Gastrocnemius medialis (tissue), 4 donors: ENCODE measurements at regions of chr3 and their contacts with region 1.

Region 1: DNA sequence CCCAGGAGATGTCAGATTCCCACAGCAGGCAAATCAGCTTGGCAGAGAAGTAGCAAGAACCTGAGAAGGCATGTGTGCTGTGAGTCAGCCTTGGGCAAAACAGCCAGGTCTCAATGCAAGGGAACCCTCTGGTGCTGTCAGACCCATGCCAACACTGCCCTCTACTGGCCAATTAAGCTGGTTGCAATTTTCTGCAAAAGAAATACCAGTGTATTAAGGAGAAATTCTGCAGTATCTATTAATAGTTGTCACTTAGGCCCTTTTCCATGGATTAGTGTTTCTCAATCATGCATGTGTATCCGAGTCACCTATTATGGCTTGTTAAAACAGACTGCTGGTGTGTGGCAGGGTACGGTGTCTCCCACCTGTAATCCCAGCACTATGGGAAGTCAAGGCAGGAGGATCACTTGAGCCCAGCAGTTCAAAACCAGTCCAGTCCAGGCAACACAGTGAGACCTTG is 26.2 kb downstream of the MAP4 start:
- DNase-seq: peak; percentile 90 to 94
- ATAC-seq: peak; percentile 98 to 99
- H3K4me3 ChIP-seq: peak overlapping the region in 1 of 4 donors; percentile 14
- H3K27ac ChIP-seq: peak overlapping the region; percentile 80 to 87 (median 81)
- H3K4me1 ChIP-seq: peaks cover 49 to 53% of the 10 kb centered on the region in 2 donors
- H3K27me3 ChIP-seq: no peaks in the 10 kb centered on the region
- CTCF ChIP-seq: peak; percentile 93 to 96 (median 94)
- POLR2A ChIP-seq: no peak

Region 2: DNA sequence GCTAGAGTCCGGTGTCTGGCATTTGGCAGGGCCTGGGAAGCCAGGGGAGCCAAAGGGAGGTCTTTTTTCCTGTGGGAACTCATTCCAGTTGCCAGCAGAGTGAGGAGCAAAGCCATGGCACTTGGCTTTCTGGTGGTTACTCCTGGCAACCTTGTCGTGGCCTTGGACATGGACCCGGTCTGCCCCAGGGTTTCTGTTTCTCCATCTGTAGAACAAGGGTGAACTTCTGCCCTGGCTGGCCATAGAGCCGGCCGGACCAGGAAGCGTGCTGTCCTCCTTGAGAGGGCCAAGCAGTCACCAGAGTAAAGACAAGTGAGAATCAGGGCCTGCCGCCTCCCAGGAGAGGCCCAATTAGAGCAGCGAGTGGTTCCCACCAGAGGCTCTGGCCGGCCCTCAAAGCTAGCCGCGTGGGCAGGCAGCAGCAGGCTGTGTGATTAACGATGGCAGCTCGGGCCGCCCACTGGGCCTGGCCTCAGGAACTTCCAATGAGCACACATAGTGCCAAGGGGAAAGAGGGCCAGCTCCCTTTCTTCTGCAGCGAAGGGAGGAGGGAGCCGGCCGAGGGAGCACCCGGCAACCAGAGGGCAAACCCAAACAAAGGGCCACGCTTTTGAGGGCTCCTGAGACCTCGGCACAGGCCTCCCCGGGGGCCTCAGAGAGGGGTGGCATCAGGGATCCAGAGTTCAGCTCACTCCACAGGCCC is 447.4 kb before region 1 on chr3:
- in situ Hi-C with region 1: loop called in 1 of 4 experiments (anchors 25 kb)
- intact Hi-C with region 1: no loop called
- DNase-seq: peak in 1 of 2 donors; percentile 13
- ATAC-seq: no peak
- H3K4me3 ChIP-seq: no peak overlapping the region
- H3K27ac ChIP-seq: no peak overlapping the region
- H3K4me1 ChIP-seq: no peaks in the 10 kb centered on the region
- H3K27me3 ChIP-seq: no peaks in the 10 kb centered on the region
- CTCF ChIP-seq: no peak
- POLR2A ChIP-seq: no peak

Region 3: GRCh38 chr3:47836986-47837385 is 153.0 kb before region 1 on chr3:
- in situ Hi-C with region 1: loop called in 3 of 4 experiments (anchors 10 kb)
- intact Hi-C with region 1: loop called (anchors 1 kb)
- DNase-seq: no peak
- ATAC-seq: no peak
- H3K4me3 ChIP-seq: no peak overlapping the region
- H3K27ac ChIP-seq: peak overlapping the region in 1 of 4 donors; percentile 54
- H3K4me1 ChIP-seq: no peaks in the 10 kb centered on the region
- H3K27me3 ChIP-seq: no peaks in the 10 kb centered on the region
- CTCF ChIP-seq: no peak
- POLR2A ChIP-seq: no peak

Region 4: DNA sequence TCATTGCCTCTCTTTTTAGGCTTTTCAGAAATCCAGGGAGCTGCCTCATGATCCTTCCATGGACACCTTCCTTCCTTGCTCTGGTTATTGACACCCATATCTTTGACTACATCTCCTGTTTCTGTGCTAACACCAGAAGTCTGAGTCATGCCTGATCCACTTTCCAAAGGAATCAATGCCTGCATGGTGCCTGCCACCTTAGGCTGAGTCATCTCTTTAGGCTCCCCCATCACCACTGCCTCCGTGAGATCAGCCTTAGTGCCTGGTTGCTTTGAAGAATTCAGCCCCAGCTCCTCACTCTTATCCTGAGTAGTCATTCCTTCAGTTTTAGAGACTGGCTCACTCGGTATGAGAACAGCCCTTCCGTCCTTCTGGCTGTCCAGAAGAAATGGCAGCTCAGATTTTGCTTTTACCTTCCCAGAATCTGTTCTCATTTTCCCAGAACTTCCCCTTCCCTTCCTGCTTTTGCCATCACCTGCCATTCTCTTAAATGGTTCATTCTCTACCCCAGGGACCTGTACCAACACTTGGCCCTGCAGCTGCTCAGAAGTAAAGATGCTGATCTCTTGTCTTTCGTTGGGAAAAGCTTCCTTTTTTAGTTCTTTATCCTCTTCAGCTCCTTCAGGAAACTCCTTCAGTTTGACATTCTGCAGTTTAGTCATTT is 79.1 kb before region 1 on chr3:
- in situ Hi-C with region 1: no loop called
- intact Hi-C with region 1: loop called (anchors 5 kb)
- DNase-seq: peak; percentile 19 to 46
- ATAC-seq: peak; percentile 83 to 90
- H3K4me3 ChIP-seq: no peak overlapping the region
- H3K27ac ChIP-seq: peak overlapping the region; percentile 58 to 80 (median 74)
- H3K4me1 ChIP-seq: peaks cover 14 to 31% of the 10 kb centered on the region in 2 donors
- H3K27me3 ChIP-seq: no peaks in the 10 kb centered on the region
- CTCF ChIP-seq: no peak
- POLR2A ChIP-seq: no peak

Region 5: GRCh38 chr3:48077815-48078214 is 87.8 kb after region 1 on chr3:
- in situ Hi-C with region 1: no loop called
- intact Hi-C with region 1: no loop called
- DNase-seq: no peak
- ATAC-seq: no peak
- H3K4me3 ChIP-seq: no peak overlapping the region
- H3K27ac ChIP-seq: no peak overlapping the region
- H3K4me1 ChIP-seq: peaks cover 24 to 32% of the 10 kb centered on the region in 2 donors
- H3K27me3 ChIP-seq: no peaks in the 10 kb centered on the region
- CTCF ChIP-seq: no peak
- POLR2A ChIP-seq: no peak

Region 6: GRCh38 chr3:48088749-48089466 is 98.9 kb after region 1 on chr3:
- in situ Hi-C with region 1: no loop called
- intact Hi-C with region 1: loop called (anchors 1 kb)
- DNase-seq: peak; percentile 96
- ATAC-seq: peak; percentile 67 to 68
- H3K4me3 ChIP-seq: peak overlapping the region; percentile 85 to 94 (median 87)
- H3K27ac ChIP-seq: peak overlapping the region; percentile 99
- H3K4me1 ChIP-seq: peaks cover 33 to 44% of the 10 kb centered on the region in 2 donors
- H3K27me3 ChIP-seq: no peaks in the 10 kb centered on the region
- CTCF ChIP-seq: no peak
- POLR2A ChIP-seq: peak; percentile 96